ENCODE measurements at regions of chr10 and their contacts with region 1.

Region 1: GRCh38 chr10:131549116-131549515 is 237.6 kb upstream of the TCERG1L start:
- DNase-seq: no peak
- H3K4me3 ChIP-seq: no peak overlapping the region
- H3K27ac ChIP-seq: no peak overlapping the region
- H3K4me1 ChIP-seq: no peaks in the 10 kb centered on the region; a peak in 2 of 7 replicates
- H3K27me3 ChIP-seq: no peaks in the 10 kb centered on the region
- CTCF ChIP-seq: no peak
- EP300 ChIP-seq: no peak
- POLR2A ChIP-seq: no peak
- RAD21 ChIP-seq: no peak

Region 2: GRCh38 chr10:131519723-131520580 is 29.2 kb before region 1 on chr10:
- CTCF ChIA-PET with region 1: no interaction called
- POLR2A ChIA-PET with region 1: no interaction called
- DNase-seq: no peak
- H3K4me3 ChIP-seq: no peak overlapping the region
- H3K27ac ChIP-seq: no peak overlapping the region
- H3K4me1 ChIP-seq: peaks cover 0 to 1% (median 0%) of the 10 kb centered on the region in 4 experiments; a peak in 3 of 7 replicates
- H3K27me3 ChIP-seq: no peaks in the 10 kb centered on the region; a peak in 1 of 7 replicates
- CTCF ChIP-seq: no peak
- EP300 ChIP-seq: no peak
- POLR2A ChIP-seq: no peak
- RAD21 ChIP-seq: no peak

Region 3: GRCh38 chr10:131533846-131534526 is 15.1 kb before region 1 on chr10:
- CTCF ChIA-PET with region 1: no interaction called
- POLR2A ChIA-PET with region 1: no interaction called
- DNase-seq: no peak
- H3K4me3 ChIP-seq: no peak overlapping the region
- H3K27ac ChIP-seq: no peak overlapping the region
- H3K4me1 ChIP-seq: no peaks in the 10 kb centered on the region
- H3K27me3 ChIP-seq: no peaks in the 10 kb centered on the region
- CTCF ChIP-seq: no peak
- EP300 ChIP-seq: no peak
- POLR2A ChIP-seq: no peak
- RAD21 ChIP-seq: no peak

Region 4: DNA sequence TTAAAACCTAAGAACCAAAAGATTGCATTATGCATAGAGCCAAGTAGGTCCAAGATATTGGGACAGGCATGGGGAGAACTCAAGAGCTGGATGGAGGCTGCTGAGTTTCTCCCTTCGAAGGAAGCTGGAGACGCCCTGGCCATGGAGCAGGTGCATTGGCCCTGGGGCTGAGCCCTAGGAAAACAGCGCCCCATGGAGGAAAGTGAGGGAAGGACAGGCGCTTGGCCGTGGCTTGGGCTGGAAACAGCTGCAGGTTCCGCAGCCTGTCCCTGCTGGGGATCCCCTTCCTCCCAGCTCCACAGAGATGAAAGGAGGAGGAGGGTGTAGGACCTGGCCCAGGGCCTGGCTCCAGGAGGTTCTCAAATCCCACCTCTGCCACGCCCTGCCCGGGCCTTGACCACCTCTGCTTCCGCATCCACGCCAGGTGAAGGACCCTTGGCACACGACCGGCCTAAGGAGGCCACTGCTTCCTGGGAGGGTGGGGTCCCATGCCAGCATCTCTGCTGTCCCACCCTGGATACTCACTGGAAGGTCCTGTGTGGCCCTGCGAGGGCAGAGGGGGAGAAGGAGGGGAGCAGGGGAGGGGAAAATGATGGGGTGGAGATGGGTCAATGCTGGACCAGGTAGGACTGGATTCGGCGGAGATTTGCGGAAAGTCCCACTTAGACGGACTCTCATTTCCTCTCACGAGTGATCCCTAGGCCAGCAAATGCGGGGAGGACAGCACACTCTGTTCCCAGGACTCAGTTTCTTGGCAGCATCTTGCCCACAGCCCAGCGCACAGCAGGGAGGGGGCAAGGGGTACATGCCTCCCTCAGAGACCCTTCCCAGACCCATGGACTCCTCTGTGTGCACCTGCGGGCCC is 21.0 kb after region 1 on chr10:
- CTCF ChIA-PET with region 1: interaction called, 11 read pairs
- POLR2A ChIA-PET with region 1: interaction called, 3 read pairs
- DNase-seq: peak; percentile 31 to 94
- H3K4me3 ChIP-seq: no peak overlapping the region
- H3K27ac ChIP-seq: no peak overlapping the region
- H3K4me1 ChIP-seq: no peaks in the 10 kb centered on the region; a peak in 1 of 7 replicates
- H3K27me3 ChIP-seq: no peaks in the 10 kb centered on the region
- CTCF ChIP-seq: peak; percentile 87 to 97 (median 93)
- EP300 ChIP-seq: no peak
- POLR2A ChIP-seq: no peak
- RAD21 ChIP-seq: peak; percentile 93 to 95

Region 5: DNA sequence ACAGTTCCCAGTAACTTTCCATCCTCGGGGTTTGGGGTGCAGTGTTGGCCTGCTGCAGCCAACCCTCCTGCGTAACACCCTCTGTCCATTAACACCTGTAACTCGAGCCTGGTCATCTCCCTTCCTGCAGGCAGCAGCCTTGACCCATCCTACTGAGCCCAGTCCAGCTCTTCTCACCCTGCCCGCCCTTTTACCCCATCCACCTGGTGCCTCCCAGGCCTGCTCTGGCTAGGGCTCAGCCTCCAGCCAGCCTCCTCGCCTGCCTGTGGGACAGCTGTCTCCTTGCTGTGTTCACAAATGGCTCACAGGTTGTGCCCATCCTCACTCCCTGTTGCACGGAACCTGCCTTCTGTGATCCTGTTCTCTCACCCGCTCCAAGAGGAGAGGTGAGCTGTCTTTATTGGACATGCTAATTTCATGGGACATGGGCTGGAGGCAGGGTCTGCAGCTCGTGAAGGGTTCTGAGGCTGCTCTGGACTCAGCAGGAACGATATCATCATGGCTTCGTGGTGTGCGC is 39.6 kb after region 1 on chr10:
- CTCF ChIA-PET with region 1: no interaction called
- POLR2A ChIA-PET with region 1: no interaction called
- DNase-seq: no peak
- H3K4me3 ChIP-seq: no peak overlapping the region
- H3K27ac ChIP-seq: no peak overlapping the region
- H3K4me1 ChIP-seq: no peaks in the 10 kb centered on the region
- H3K27me3 ChIP-seq: no peaks in the 10 kb centered on the region
- CTCF ChIP-seq: no peak
- EP300 ChIP-seq: no peak
- POLR2A ChIP-seq: no peak
- RAD21 ChIP-seq: no peak